CD4-positive, alpha-beta T cell (primary cell): ENCODE measurements at regions of chr9 and their contacts with region 1.

Region 1: GRCh38 chr9:70218767-70219166 is 40.0 kb upstream of the SMC5 start:
- DNase-seq: no peak
- ATAC-seq: no peak
- H3K4me3 ChIP-seq: no peak overlapping the region
- H3K4me3 Mint-ChIP-seq: no peak overlapping the region
- H3K27ac ChIP-seq: no peak overlapping the region
- H3K27ac Mint-ChIP-seq: no peak overlapping the region
- H3K4me1 ChIP-seq: no peaks in the 10 kb centered on the region
- H3K4me1 Mint-ChIP-seq: no peaks in the 10 kb centered on the region
- H3K27me3 ChIP-seq: no peaks in the 10 kb centered on the region
- H3K27me3 Mint-ChIP-seq: no peaks in the 10 kb centered on the region
- CTCF ChIP-seq: no peak

Region 2: GRCh38 chr9:70160686-70161600 is 57.8 kb before region 1 on chr9:
- CTCF ChIA-PET with region 1: no interaction called
- POLR2A ChIA-PET with region 1: no interaction called
- intact Hi-C with region 1: loop called in 1 of 2 experiments (anchors 10 kb)
- DNase-seq: no peak
- ATAC-seq: no peak
- H3K4me3 ChIP-seq: no peak overlapping the region
- H3K4me3 Mint-ChIP-seq: no peak overlapping the region
- H3K27ac ChIP-seq: no peak overlapping the region
- H3K27ac Mint-ChIP-seq: no peak overlapping the region
- H3K4me1 ChIP-seq: no peaks in the 10 kb centered on the region
- H3K4me1 Mint-ChIP-seq: no peaks in the 10 kb centered on the region
- H3K27me3 ChIP-seq: no peaks in the 10 kb centered on the region
- H3K27me3 Mint-ChIP-seq: peaks cover 10% of the 10 kb centered on the region
- CTCF ChIP-seq: no peak

Region 3: GRCh38 chr9:70278312-70278711 is 59.5 kb after region 1 on chr9:
- CTCF ChIA-PET with region 1: no interaction called
- POLR2A ChIA-PET with region 1: no interaction called
- intact Hi-C with region 1: no loop called
- DNase-seq: no peak
- ATAC-seq: no peak
- H3K4me3 ChIP-seq: no peak overlapping the region
- H3K4me3 Mint-ChIP-seq: no peak overlapping the region
- H3K27ac ChIP-seq: no peak overlapping the region
- H3K27ac Mint-ChIP-seq: no peak overlapping the region
- H3K4me1 ChIP-seq: no peaks in the 10 kb centered on the region
- H3K4me1 Mint-ChIP-seq: peaks cover 37% of the 10 kb centered on the region
- H3K27me3 ChIP-seq: no peaks in the 10 kb centered on the region
- H3K27me3 Mint-ChIP-seq: no peaks in the 10 kb centered on the region
- CTCF ChIP-seq: no peak